ENCODE measurements at regions of chr14 and their contacts with region 1.

Region 1: DNA sequence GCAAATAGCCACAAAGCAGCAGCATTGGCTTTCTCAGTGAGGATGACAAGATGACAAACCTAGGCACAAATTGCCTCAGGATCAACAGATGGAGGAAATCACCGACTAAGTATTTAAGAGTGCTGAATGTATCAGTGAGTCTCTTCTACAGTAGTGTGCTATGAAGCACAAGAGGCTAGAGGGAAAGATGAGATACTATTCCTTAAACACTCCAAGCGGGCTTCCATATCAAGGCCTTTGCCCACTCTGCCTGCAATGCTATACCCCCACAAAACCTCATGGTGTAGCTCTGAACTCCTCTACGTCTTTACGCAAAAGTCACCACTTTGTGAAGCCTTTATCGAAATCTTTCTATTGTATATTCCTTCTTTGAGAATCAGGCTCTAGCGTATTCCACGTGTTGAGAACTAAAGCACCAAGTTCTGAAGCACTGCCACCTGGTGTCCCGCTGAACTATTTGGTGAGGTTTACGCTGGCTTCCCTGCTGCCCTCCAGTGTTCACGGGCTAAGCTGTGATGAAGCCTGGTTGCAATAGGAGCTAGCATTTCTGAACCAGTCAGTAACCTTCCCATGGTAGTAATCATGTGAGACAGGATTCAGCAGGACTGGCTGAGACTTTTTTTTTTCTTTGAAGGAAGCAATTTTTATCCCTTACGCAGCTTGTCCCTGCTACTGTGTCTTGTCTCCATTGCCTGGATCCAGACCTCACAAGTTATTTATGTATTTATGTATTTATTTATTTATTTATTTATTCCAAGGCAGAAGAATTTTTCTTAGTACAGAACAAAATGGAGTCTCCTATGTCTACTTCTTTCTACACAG is 426.5 kb upstream of the OR4E1 start:
- DNase-seq: peak in 1 of 2 donors; percentile 61
- ATAC-seq: peak; percentile 87
- H3K4me3 ChIP-seq: no peak overlapping the region
- H3K27ac ChIP-seq: no peak overlapping the region
- H3K4me1 ChIP-seq: no peaks in the 10 kb centered on the region
- H3K27me3 ChIP-seq: peaks cover 0 to 3% of the 10 kb centered on the region in 2 donors

Region 2: DNA sequence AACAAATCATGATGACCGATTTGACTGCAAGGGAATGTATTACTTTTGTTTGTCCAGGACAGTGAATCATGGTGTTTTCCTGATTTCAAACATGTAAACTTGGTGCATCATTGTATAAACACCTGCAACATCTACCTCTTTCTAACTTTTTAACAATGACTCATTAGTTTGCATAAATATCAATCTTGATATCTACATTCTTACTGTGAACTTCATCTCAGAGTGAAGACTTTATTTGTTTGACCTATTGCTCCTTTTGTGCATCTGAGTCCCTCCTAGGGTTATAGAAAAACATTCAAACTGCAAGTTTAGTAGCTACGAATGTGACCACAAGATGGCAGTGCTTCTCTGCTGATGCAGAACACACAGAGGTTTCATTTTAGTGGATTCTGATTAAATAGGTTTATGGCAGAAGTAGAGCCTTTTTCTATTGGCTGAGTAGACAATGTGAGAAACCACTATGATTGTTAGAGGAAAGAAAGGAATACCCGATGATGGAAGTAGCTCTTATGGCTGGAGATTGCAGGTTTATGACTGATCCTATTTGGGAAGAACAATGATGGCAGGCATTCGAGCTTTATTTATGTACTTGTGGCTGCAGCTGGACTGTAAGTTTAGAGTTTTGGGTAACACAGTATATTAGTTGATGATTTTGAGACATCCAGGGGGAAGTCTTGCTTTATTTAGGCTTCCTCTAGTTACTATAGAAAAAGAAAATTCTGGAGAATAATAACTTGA is 182.3 kb before region 1 on chr14:
- intact Hi-C with region 1: loop called in 1 of 2 experiments (anchors 5 kb)
- DNase-seq: no peak
- ATAC-seq: no peak
- H3K4me3 ChIP-seq: no peak overlapping the region
- H3K27ac ChIP-seq: no peak overlapping the region
- H3K4me1 ChIP-seq: no peaks in the 10 kb centered on the region
- H3K27me3 ChIP-seq: no peaks in the 10 kb centered on the region